ENCODE measurements at regions of chr16 and their contacts with region 1.

Region 1: GRCh38 chr16:87062569-87063442 is 254.4 kb downstream of the C16orf95 start:
- DNase-seq: peak in 1 of 2 experiments; percentile 82
- H3K4me3 ChIP-seq: peak overlapping the region in 1 of 4 experiments; percentile 37; a peak in 1 of 8 replicates
- H3K27ac ChIP-seq: no peak overlapping the region
- H3K4me1 ChIP-seq: no peaks in the 10 kb centered on the region; a peak in 1 of 7 replicates
- H3K27me3 ChIP-seq: no peaks in the 10 kb centered on the region
- CTCF ChIP-seq: peak; percentile 74 to 84 (median 77)
- EP300 ChIP-seq: no peak
- POLR2A ChIP-seq: no peak
- RAD21 ChIP-seq: peak; percentile 82 to 85

Region 2: DNA sequence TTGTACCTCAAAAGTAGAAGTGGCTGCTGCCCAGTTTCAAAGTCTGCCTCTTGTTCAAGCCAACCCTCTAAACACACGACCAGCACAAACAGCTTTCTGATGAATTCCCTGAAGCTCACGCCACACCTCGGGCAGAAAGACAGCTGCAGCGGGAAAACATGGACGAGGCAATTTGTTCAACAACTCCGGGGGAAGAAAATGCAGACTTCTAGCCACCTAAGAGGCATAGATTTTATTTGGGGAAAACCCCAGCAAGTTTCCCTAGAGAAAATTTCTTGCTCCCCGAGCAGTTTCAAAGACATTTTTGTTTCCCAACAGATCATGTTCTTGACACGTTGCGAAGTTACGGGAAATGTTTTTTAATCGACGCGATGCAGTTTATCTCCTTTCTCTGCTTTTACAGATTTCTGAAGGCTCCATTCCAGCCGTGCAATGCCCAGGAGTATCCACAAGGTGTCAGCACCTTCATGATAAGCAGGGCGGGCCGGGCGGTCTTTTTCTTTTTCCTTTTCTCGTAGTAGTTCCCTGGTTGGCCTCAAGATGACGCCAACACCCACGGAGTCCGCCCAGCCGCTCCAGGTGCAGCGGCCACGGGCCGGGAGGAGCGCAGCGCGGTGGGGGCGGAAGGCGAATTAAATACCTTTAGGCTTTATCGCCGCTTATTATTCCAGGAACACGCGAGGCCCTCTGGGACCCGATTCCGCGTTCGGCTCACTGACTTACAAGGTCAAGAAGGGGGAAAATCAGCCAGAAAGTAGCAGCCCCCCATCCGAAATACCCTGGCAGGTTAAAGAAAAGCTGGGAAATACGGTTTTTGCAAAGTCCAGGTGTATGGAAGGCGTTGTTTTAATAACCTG is 499.1 kb before region 1 on chr16:
- CTCF ChIA-PET with region 1: interaction called, 52 read pairs
- POLR2A ChIA-PET with region 1: interaction called, 3 read pairs
- DNase-seq: peak in 1 of 2 experiments; percentile 95
- H3K4me3 ChIP-seq: peak overlapping the region in 3 of 4 experiments; percentile 34 to 53 (median 43); a peak in 6 of 8 replicates
- H3K27ac ChIP-seq: no peak overlapping the region
- H3K4me1 ChIP-seq: peaks cover 3 to 16% (median 8%) of the 10 kb centered on the region in 4 experiments
- H3K27me3 ChIP-seq: peaks cover 39 to 56% (median 49%) of the 10 kb centered on the region in 4 experiments; a peak in 6 of 7 replicates
- CTCF ChIP-seq: peak; percentile 82 to 99 (median 97)
- EP300 ChIP-seq: no peak
- POLR2A ChIP-seq: no peak
- RAD21 ChIP-seq: peak; percentile 100

Region 3: DNA sequence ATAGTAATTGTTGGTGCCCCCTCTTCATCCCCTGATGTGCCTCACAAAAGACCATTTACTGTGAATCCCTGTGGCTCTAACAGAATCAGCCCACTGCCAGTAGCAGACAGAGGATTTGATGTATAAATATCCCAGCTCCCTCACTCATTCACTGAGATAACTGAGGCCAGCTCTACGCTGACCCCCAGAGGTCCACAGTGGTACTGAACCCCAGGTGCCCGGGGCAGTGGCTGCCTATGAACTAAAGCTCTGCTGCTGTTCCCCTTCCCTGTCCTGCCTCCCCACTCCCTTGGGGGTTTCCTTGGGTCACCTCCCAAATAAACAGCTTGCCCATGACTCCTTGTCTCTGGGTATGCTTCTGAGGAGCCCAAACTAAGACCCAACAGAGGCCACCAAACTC is 188.7 kb before region 1 on chr16:
- CTCF ChIA-PET with region 1: interaction called, 10 read pairs
- POLR2A ChIA-PET with region 1: interaction called, 3 read pairs
- DNase-seq: peak; percentile 19 to 90
- H3K4me3 ChIP-seq: no peak overlapping the region
- H3K27ac ChIP-seq: no peak overlapping the region
- H3K4me1 ChIP-seq: no peaks in the 10 kb centered on the region
- H3K27me3 ChIP-seq: no peaks in the 10 kb centered on the region
- CTCF ChIP-seq: peak; percentile 80 to 86 (median 84)
- EP300 ChIP-seq: no peak
- POLR2A ChIP-seq: no peak
- RAD21 ChIP-seq: peak; percentile 83 to 90

Region 4: GRCh38 chr16:87002717-87003413 is 59.9 kb before region 1 on chr16:
- CTCF ChIA-PET with region 1: no interaction called
- POLR2A ChIA-PET with region 1: no interaction called
- DNase-seq: no peak
- H3K4me3 ChIP-seq: no peak overlapping the region
- H3K27ac ChIP-seq: no peak overlapping the region
- H3K4me1 ChIP-seq: no peaks in the 10 kb centered on the region
- H3K27me3 ChIP-seq: no peaks in the 10 kb centered on the region; a peak in 1 of 7 replicates
- CTCF ChIP-seq: no peak
- EP300 ChIP-seq: no peak
- POLR2A ChIP-seq: no peak
- RAD21 ChIP-seq: no peak

Region 5: DNA sequence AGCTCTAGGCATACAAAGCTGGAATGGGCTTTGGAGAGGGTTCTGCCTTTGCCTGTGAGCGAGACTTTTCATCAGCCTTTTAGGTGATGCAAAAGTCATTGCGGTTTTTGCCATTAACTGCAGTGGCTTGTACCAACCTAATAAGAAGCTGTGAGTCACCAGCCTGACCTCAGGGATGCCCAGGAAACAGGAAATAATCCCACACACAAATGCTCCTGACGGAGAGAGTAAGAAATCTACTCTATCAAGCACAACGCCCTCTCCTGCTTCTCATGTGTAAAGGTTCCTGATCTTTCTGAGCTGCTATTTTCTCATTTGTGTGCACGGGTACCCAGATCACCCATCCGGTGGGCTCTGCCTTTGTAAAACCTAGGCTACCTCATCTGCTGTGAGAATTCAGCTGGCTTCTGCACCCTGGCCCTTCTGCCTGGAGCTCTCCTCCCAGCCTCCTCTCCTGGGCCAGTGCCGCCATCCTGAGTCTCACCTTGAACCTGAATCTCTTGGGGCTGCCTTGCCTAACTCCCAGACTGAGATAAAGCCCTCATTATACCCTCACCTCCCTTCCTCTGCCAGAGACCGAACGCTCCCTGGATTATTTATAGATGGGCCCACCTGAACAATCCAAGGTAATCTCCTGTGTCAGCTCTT is 45.3 kb before region 1 on chr16:
- CTCF ChIA-PET with region 1: interaction called, 17 read pairs
- POLR2A ChIA-PET with region 1: no interaction called
- DNase-seq: no peak
- H3K4me3 ChIP-seq: no peak overlapping the region
- H3K27ac ChIP-seq: no peak overlapping the region
- H3K4me1 ChIP-seq: no peaks in the 10 kb centered on the region; a peak in 1 of 7 replicates
- H3K27me3 ChIP-seq: no peaks in the 10 kb centered on the region
- CTCF ChIP-seq: peak in 2 of 3 experiments; percentile 20 to 51; a peak in 2 of 4 replicates
- EP300 ChIP-seq: no peak
- POLR2A ChIP-seq: no peak
- RAD21 ChIP-seq: peak; percentile 40 to 53

Region 6: GRCh38 chr16:87043231-87044031 is 19.4 kb before region 1 on chr16:
- CTCF ChIA-PET with region 1: interaction called, 22 read pairs
- POLR2A ChIA-PET with region 1: interaction called, 5 read pairs
- DNase-seq: no peak
- H3K4me3 ChIP-seq: no peak overlapping the region
- H3K27ac ChIP-seq: no peak overlapping the region
- H3K4me1 ChIP-seq: peaks cover 3 to 11% (median 6%) of the 10 kb centered on the region in 4 experiments; a peak in 5 of 7 replicates
- H3K27me3 ChIP-seq: no peaks in the 10 kb centered on the region
- CTCF ChIP-seq: no peak
- EP300 ChIP-seq: no peak
- POLR2A ChIP-seq: no peak
- RAD21 ChIP-seq: no peak

Region 7: DNA sequence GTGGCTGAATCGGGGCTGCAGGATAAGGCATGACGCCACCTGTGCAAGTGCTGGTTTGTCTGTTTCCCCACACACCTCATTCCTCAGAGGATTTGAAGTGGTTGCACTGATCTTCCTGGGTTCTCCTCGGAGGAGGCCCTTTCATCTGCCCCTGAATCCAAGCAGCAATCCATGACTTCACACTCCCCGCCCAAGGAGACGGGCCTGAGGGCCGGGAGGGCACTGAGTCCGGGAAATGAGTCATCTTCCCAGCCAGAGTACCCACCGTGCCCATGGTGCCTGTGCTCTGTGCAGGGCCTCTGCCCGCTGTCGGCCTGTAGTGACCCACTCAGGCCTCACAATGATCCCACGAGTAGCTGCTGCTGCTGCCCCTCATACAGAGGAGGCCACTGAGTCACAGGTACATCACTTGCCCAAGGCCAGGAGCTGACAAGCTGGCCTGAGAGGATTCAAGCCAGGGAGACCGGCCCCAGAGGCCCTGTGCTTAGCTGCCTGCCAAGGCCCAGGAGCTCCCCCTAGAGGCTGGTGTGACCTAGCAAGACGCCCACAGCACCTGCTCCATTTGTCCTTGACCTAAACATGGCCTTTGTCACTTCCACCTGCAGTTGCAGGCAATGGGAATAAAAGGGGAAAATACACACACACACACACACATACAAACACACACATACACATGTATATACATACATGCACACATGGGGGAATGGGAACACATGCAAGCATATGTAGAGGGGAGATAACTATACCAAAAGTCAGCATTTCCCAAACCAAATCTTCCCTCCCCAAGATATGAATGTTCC is 14.3 kb after region 1 on chr16:
- CTCF ChIA-PET with region 1: interaction called, 48 read pairs
- POLR2A ChIA-PET with region 1: no interaction called
- DNase-seq: peak; percentile 65 to 91
- H3K4me3 ChIP-seq: no peak overlapping the region
- H3K27ac ChIP-seq: no peak overlapping the region
- H3K4me1 ChIP-seq: no peaks in the 10 kb centered on the region; a peak in 2 of 7 replicates
- H3K27me3 ChIP-seq: no peaks in the 10 kb centered on the region
- CTCF ChIP-seq: peak; percentile 88 to 97 (median 93)
- EP300 ChIP-seq: no peak
- POLR2A ChIP-seq: no peak
- RAD21 ChIP-seq: peak; percentile 80 to 86

Measured in H1 (cell line).